ENCODE measurements at regions of chr14 and their contacts with region 1.

Region 1: GRCh38 chr14:20343092-20343861 is at the start of gene PARP2:
- DNase-seq: peak; percentile 98
- ATAC-seq: peak; percentile 96
- total RNA-seq, gene PARP2: 15.6 TPM

Region 2: GRCh38 chr14:20454516-20455354 is 111.5 kb after region 1 on chr14 and contains the starts of genes APEX1 and OSGEP:
- intact Hi-C with region 1: loop called (anchors 10 kb)
- DNase-seq: peak; percentile 99
- ATAC-seq: peak; percentile 96
- total RNA-seq, gene APEX1: 69.2 TPM
- total RNA-seq, gene OSGEP: 15.6 TPM

Measured in Right ventricle myocardium superior (tissue), 1 donor.